ENCODE measurements at regions of chr9 and their contacts with region 1.

Region 1: GRCh38 chr9:129884220-129885017 is 49.2 kb downstream of the USP20 start:
- DNase-seq: peak; percentile 98
- H3K4me3 Mint-ChIP-seq: peak overlapping the region; percentile 93
- H3K27ac Mint-ChIP-seq: peak overlapping the region; percentile 97
- H3K4me1 Mint-ChIP-seq: peaks cover 41% of the 10 kb centered on the region
- H3K27me3 Mint-ChIP-seq: no peaks in the 10 kb centered on the region

Region 2: DNA sequence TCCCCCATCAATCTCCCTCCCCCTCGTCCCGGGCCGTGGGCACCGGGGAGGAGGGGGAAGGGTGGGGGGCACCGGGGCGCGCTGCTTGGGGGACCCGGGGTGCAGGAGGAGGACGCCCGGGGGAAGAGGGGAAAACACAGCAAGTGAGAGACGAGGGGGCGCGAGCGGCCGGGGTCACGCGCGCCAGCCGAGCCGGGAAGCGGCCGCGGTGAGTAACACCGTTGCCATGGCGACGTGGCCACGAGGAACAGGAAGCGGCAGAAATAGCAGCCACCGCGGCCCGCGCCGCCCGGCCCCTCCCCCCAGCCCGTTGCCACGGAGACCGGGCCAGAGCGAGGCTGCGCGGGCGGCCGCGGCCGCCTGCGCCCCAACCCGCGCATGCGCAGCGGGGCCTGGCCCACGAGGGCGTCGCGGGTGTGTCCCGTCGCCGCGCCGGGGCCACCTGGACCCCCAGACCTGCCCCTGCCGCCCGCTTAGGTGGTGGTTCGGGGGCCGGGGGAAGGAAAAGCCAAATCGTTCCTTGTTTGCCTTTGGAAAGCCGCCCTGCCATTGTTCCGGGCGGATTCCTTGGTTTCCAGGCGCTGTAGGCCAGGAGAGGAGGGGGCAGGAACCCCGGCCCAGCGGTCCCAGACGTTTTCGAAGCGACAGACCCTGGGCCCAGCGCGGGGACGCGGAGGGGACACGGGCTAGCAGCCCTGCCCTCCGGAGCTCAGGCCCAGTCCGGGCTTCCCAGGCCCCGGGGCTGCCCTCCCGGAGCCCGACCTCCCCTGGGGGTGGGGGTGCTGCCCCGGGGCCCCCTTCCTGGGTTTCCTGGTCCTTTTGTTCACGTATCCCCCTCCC is 470.7 kb before region 1 on chr9:
- CTCF ChIA-PET with region 1: no interaction called
- POLR2A ChIA-PET with region 1: no interaction called
- intact Hi-C with region 1: loop called (anchors 5 kb)
- DNase-seq: peak; percentile 98
- H3K4me3 Mint-ChIP-seq: peak overlapping the region; percentile 73
- H3K27ac Mint-ChIP-seq: peak overlapping the region; percentile 98
- H3K4me1 Mint-ChIP-seq: peaks cover 14% of the 10 kb centered on the region
- H3K27me3 Mint-ChIP-seq: no peaks in the 10 kb centered on the region

Region 3: DNA sequence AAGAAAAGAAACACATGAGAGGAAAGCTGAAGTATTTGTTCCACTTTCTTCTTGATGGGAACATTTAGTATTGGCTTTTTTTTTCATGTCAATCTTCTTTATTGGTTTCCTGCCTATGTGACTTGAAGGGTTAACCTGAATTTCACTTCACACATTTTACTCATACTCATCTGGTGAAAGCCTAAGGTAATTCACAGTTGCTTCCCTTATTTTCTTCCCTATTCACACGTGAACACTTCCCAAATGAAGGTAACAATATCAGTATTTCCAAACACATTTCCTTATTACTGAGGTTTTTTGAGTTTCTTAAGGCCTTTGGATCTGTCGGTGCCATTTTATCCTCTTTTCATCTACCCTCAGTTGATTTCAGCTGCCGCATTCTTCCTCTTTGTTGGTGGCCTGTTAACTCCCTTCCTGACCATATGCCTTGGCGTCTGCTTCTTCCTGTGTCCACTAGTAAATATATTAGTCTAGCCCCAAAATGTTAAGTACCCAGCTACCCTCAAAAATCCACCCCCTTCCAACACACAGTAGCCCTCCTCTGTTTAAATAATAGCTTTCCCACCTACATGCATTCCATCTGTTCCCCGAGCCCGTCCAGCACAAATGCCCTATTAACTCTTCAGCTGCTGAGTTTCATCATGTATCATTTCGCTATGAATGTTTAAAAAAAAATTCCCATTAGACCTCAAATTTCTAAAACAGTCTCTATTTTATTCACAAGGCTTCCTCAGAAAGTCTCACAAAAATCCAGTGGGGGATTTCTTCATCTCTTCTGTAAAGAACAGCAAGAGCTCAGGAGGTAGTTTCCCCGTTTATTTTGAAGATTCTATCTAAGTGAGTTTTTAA is 48.1 kb after region 1 on chr9:
- CTCF ChIA-PET with region 1: interaction called, 9 read pairs
- POLR2A ChIA-PET with region 1: interaction called, 25 read pairs
- intact Hi-C with region 1: loop called (anchors 2 kb)
- DNase-seq: no peak
- H3K4me3 Mint-ChIP-seq: peak overlapping the region; percentile 48
- H3K27ac Mint-ChIP-seq: peak overlapping the region; percentile 87
- H3K4me1 Mint-ChIP-seq: peaks cover 67% of the 10 kb centered on the region
- H3K27me3 Mint-ChIP-seq: no peaks in the 10 kb centered on the region

Region 4: DNA sequence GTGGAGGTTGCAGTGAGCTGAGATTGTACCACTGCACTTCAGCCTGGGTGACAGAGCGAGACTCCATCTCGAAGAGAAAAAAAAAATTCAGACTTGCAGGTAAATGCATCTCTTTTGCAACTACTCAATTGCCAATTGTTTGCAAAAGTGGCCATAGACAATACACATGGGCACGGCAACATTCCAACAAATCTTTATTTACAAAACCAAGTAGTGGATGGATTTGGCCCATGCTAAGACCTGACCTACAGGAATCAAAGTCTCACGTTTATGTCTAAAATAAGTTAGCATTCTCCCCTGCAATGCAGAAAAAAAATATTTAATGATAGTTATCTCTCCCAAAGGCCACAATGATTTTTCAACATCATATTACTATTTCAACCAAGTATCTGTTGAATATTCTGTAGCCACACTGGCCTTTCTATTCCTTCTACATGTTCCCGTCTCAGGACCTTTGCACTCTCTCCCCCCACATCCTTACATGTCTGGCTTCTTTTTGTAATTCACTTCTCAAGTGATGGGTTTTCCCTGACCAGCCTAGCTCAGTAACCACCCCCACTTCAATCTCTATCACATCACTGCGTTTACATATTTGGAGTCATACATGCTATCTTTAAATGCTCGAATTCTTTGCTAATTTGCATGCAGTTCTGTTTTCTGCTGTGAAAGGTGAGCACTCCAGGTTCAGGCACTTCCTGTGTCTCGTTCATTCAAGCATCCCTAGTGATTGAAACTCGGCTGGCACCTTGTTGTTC is 104.4 kb after region 1 on chr9:
- CTCF ChIA-PET with region 1: interaction called, 5 read pairs
- POLR2A ChIA-PET with region 1: interaction called, 10 read pairs
- intact Hi-C with region 1: loop called (anchors 1 kb)
- DNase-seq: peak; percentile 51
- H3K4me3 Mint-ChIP-seq: peak overlapping the region; percentile 10
- H3K27ac Mint-ChIP-seq: peak overlapping the region; percentile 87
- H3K4me1 Mint-ChIP-seq: peaks cover 78% of the 10 kb centered on the region
- H3K27me3 Mint-ChIP-seq: no peaks in the 10 kb centered on the region

Region 5: DNA sequence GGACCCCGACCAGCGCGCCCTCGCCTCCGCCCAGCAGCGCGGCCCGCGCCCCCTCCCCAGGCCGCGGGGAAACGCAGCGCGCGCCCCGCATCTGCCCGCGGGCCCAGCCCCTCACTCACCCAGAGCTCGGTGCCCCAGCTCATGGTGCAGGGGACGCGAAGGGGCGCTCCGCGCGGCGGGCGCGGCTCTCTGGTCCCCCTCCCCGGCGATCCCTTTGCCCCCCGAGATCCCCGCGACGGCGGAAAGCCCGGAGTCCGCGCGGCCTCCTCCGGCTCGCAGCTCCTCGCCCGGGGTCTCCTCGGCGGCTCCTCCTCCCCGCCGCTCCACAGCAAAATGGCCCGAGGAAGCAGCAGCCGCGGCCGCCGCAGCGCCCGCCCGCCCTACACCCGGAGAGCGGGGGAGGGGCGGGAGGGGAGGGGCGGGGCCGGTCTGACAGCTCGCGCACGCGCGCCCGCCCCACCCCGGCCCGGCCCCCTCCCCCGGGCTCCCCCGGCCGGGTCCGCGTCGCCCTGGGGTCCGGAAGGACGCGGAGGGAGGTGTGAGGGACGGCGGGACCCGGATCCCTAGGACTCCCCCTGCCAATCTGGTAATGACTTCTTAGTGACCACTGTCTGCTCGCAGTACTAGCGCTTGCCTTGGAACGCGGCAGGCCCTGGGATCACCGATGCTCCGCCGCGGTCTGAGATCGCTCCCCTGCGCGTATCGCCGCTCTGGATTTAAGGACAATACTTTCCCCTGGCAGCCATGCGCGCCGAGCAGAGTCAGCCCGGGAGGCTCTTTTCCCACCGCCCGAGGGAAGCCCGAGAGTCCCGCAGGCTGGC is 158.6 kb after region 1 on chr9 and contains the start of gene FNBP1:
- CTCF ChIA-PET with region 1: interaction called, 15 read pairs
- POLR2A ChIA-PET with region 1: interaction called, 76 read pairs
- intact Hi-C with region 1: loop called (anchors 1 kb)
- DNase-seq: peak; percentile 86
- H3K4me3 Mint-ChIP-seq: peak within 1 kb of the TSS; percentile 98
- H3K27ac Mint-ChIP-seq: peak within 1 kb of the TSS; percentile 99
- H3K4me1 Mint-ChIP-seq: peaks cover 37% of the 10 kb centered on the region
- H3K27me3 Mint-ChIP-seq: no peaks in the 10 kb centered on the region
- total RNA-seq, gene FNBP1: 215 to 228 TPM

Region 6: GRCh38 chr9:130128733-130129431 is 244.5 kb after region 1 on chr9:
- CTCF ChIA-PET with region 1: interaction called, 4 read pairs
- POLR2A ChIA-PET with region 1: interaction called, 4 read pairs
- intact Hi-C with region 1: loop called (anchors 1 kb)
- DNase-seq: peak; percentile 78
- H3K4me3 Mint-ChIP-seq: peak overlapping the region; percentile 71
- H3K27ac Mint-ChIP-seq: peak overlapping the region; percentile 98
- H3K4me1 Mint-ChIP-seq: peaks cover 49% of the 10 kb centered on the region
- H3K27me3 Mint-ChIP-seq: no peaks in the 10 kb centered on the region